ENCODE measurements at regions of chr17 and their contacts with region 1.

Region 1: DNA sequence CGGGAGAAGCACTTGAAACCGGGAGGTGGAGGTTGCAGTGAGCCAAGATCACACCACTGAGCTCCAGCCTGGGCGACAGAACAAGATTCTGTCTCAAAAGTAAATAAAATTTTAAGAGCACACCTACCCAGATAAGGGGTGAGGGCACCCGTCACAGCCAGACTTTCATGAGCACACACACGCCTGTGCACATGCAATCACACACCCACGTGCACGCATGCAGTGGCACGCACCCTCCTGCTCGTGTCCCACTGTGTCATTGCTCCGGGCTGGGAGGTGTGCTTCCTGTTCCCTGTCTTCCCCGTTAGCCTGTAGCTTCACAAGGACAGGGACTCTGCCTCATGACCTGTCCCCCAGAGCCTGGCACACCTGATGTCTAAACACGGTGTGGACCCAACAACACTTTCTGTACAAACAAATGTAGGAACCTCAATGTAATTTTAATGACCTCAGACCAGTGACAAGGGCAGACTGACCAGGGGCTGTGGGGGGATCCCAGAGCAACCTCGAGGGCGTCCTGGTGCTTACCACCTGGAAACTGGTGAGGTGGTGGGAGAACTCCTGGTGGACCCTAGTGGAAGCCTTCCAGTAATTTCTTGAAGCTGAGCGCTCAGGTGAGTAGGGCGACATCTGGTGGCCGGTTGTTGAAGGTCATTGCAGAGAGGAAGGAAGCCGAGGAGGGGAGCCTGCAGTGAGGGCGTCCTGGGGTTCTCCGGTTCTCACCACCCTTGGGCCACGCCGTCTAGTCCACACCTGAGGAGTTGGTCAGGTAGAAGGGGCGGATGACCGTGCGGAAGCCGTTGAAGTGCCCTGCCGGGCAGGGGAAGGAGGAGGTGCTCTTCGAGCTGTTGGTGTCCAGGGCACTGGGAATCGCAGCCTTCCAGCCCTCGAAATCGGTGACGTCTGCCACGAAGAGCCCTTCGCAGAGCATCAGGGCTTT is 8.6 kb downstream of the LGALS3BP start:
- DNase-seq: peak; percentile 58
- H3K4me3 Mint-ChIP-seq: no peak overlapping the region
- H3K27ac Mint-ChIP-seq: peak overlapping the region; percentile 40
- H3K4me1 Mint-ChIP-seq: peaks cover 7% of the 10 kb centered on the region
- H3K27me3 Mint-ChIP-seq: peaks cover 2% of the 10 kb centered on the region

Region 2: DNA sequence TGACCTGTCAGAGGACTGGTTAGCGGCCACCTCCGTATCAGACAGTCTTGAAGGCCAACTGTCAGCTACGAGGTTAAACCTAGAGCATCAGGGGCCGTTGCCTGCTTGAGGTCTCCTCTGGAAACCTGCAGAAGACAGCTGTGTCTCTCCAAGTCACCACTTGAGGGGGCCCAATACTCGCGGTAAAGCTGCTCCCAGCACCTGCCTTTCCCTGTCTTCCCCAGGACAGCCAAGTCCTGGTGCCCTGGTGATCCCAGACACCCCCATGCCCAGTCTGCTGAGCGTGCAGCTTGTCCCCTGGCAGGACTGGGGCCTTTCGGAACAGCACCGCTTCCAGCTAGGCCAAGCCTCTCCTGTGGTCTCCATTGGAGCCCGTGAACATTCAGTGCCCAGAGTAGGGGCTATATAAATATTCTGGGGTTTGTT is 474.0 kb before region 1 on chr17:
- intact Hi-C with region 1: loop called (anchors 1 kb)
- DNase-seq: peak; percentile 30
- H3K4me3 Mint-ChIP-seq: no peak overlapping the region
- H3K27ac Mint-ChIP-seq: no peak overlapping the region
- H3K4me1 Mint-ChIP-seq: no peaks in the 10 kb centered on the region
- H3K27me3 Mint-ChIP-seq: peaks cover 2% of the 10 kb centered on the region

Region 3: DNA sequence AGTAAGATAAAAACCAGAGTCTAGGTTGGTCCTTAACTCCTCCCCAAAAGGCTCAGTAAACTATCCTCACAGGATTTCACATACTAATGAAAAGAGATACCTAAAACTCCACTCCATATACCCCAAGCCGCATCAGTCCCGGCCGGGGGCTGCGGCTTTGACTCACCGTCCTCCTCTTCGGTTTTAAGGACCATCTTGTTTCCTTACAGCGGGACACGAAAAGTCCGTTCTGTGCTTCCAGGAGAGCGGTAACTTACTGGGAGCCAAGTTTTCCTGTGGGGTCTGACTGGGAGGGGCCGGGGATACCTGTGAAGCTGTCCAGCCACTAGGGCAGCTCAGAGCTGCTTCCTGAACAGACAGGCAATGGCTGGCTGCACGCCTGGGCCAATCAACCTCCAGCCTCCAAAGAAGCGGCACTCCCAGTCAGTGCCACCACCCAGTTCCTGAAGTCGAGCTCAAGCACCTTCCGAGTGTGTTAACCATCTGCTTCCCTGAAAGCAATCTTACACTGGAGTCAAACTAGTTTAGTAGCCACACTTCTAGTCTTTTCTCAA is 234.5 kb before region 1 on chr17:
- intact Hi-C with region 1: no loop called
- DNase-seq: peak; percentile 62
- H3K4me3 Mint-ChIP-seq: peak overlapping the region; percentile 84
- H3K27ac Mint-ChIP-seq: peak overlapping the region; percentile 89
- H3K4me1 Mint-ChIP-seq: peaks cover 76% of the 10 kb centered on the region
- H3K27me3 Mint-ChIP-seq: no peaks in the 10 kb centered on the region

Region 4: GRCh38 chr17:78865682-78866390 is 105.3 kb before region 1 on chr17:
- intact Hi-C with region 1: loop called (anchors 1 kb)
- DNase-seq: peak; percentile 51
- H3K4me3 Mint-ChIP-seq: no peak overlapping the region
- H3K27ac Mint-ChIP-seq: no peak overlapping the region
- H3K4me1 Mint-ChIP-seq: no peaks in the 10 kb centered on the region
- H3K27me3 Mint-ChIP-seq: peaks cover 8% of the 10 kb centered on the region